ENCODE measurements at regions of chr19 and their contacts with region 1.

Region 1: DNA sequence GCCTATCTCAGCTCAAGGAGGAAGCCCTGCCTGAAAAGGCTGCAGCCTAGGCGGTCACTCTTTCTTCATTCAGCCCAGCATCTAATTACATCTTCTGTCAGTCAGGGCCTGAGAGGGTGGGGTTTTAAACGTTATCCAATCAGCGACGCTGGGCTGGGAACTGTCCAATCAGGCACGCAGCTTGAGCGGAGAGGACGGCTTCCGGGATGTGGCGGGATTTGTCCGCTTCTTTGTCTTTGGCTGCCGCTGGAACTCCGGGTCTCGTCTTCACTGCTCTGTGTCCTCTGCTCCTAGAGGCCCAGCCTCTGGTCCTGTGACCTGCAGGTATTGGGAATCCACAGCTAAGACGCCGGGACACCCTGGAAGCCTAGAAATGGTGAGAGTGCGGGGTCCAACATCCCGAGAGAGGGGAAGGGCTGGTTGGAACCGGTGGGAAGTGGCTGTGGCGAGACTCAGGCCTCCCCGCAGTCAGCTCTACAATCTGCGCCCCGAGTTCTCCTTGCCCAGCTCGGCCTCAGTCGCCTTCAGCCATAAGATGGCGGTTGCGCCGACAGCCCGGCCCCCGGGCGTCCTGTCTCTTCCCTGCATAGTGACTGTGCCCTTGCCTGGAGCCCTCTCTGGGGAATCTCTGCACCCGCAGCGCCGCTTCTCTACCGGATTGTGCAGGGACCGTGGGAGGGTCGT is at the start of gene ZNF738:
- DNase-seq: peak; percentile 88
- H3K4me3 Mint-ChIP-seq: peak within 1 kb of the TSS; percentile 98
- H3K27ac Mint-ChIP-seq: peak within 1 kb of the TSS; percentile 96
- H3K4me1 Mint-ChIP-seq: peaks cover 10% of the 10 kb centered on the region
- H3K27me3 Mint-ChIP-seq: no peaks in the 10 kb centered on the region
- total RNA-seq, gene ZNF738: 10.5 to 11.2 TPM

Region 2: DNA sequence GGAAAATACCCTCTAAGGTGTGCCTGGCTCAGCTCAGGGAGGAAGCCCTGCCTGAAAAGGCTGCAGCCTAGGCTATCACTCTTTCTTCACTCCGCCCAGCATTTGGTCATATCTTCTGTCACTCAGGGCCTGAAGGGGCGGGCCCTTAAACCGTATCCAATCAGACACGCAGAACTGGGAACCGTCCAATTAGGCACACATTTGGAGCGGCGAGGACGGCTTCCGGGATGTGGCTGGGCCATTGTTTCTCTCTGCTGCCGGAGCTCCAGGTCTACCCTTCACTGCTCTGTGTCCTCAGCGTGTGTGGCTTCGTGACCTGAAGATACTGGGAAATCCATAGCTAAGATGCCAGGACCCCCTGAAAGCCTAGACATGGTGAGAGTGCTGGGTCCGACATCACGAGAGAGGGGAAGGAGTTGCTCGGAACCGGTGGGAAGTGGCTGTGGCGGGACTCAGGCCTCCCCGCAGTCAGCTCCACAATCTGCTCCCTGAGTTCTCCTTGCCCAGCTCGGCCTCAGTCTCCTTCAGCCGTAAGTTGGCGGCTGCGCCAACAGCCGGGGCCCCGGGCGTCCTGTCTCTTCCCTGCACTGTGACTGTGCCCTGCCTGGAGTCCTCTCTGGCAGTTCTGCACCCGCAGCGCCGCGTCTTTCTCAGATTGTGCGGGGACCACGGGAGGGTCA is 38.1 kb after region 1 on chr19 and contains the start of gene ZNF493:
- CTCF ChIA-PET with region 1: no interaction called
- POLR2A ChIA-PET with region 1: interaction called, 19 read pairs
- DNase-seq: peak; percentile 93
- H3K4me3 Mint-ChIP-seq: peak within 1 kb of the TSS; percentile 93
- H3K27ac Mint-ChIP-seq: peak within 1 kb of the TSS; percentile 81
- H3K4me1 Mint-ChIP-seq: peaks cover 22% of the 10 kb centered on the region
- H3K27me3 Mint-ChIP-seq: no peaks in the 10 kb centered on the region
- total RNA-seq, gene ZNF493: 15.7 to 17.5 TPM

Measured in activated CD4-positive, alpha-beta memory T cell treated with anti-CD3 and anti-CD28 coated beads, Interleukin-2, amount 10 ng/mL, durations not matched to agents 7 days and 5 days (primary cell).